ENCODE measurements at regions of chr1 and their contacts with region 1.

Region 1: GRCh38 chr1:112298558-112298957 is 97.5 kb upstream of the CTTNBP2NL start:
- DNase-seq: peak; percentile 72
- H3K4me3 ChIP-seq: no peak overlapping the region
- H3K27ac ChIP-seq: no peak overlapping the region
- H3K4me1 ChIP-seq: no peaks in the 10 kb centered on the region
- H3K27me3 ChIP-seq: peaks cover 6% of the 10 kb centered on the region in 2 experiments
- CTCF ChIP-seq: peak; percentile 76 to 83
- POLR2A ChIP-seq: no peak

Region 2: GRCh38 chr1:112317140-112317539 is 18.6 kb after region 1 on chr1:
- CTCF ChIA-PET with region 1: interaction called, 43 read pairs
- POLR2A ChIA-PET with region 1: no interaction called
- dilution Hi-C with region 1: no loop called
- intact Hi-C with region 1: no loop called
- DNase-seq: no peak
- H3K4me3 ChIP-seq: no peak overlapping the region
- H3K27ac ChIP-seq: no peak overlapping the region
- H3K4me1 ChIP-seq: peaks cover 4% of the 10 kb centered on the region
- H3K27me3 ChIP-seq: peaks cover 2 to 4% of the 10 kb centered on the region in 2 experiments
- CTCF ChIP-seq: no peak
- POLR2A ChIP-seq: no peak

Region 3: DNA sequence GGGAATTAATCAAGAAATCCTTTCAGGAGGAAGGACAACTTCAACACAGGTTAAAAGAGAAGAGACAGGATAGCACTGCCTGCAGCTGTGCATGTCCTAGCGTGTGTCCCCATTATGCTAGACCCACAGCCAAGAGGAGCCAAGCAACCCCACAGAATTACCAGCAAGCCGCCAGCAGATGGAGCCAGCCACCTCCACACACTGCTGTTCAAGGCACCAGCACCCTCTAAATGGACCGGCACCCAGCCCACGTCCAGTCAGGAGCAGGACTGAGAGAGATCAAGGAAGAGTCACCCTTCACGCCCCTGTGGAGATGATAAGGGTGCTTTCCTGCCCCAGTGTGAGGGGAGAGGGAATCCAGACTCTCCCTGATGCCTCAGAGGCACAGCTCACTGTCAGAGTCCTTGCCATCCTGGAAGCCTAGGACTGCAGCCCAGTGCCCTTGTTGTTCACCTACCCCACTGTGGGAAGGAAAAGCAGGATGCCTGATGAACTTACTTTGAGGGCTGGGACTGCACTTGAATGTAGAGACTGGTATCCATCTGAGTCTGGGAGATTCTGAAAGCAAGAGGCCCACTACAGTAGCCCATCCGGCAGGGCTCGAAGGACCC is 60.3 kb after region 1 on chr1:
- CTCF ChIA-PET with region 1: interaction called, 20 read pairs
- POLR2A ChIA-PET with region 1: no interaction called
- dilution Hi-C with region 1: no loop called
- intact Hi-C with region 1: no loop called
- DNase-seq: peak; percentile 65
- H3K4me3 ChIP-seq: no peak overlapping the region
- H3K27ac ChIP-seq: no peak overlapping the region
- H3K4me1 ChIP-seq: no peaks in the 10 kb centered on the region
- H3K27me3 ChIP-seq: peaks cover 14 to 30% of the 10 kb centered on the region in 2 experiments
- CTCF ChIP-seq: peak; percentile 79 to 88
- POLR2A ChIP-seq: no peak

Region 4: GRCh38 chr1:112614460-112615065 is 316.0 kb after region 1 on chr1:
- CTCF ChIA-PET with region 1: interaction called, 10 read pairs
- POLR2A ChIA-PET with region 1: no interaction called
- dilution Hi-C with region 1: no loop called
- intact Hi-C with region 1: loop called (anchors 2 kb)
- DNase-seq: peak; percentile 64
- H3K4me3 ChIP-seq: no peak overlapping the region
- H3K27ac ChIP-seq: no peak overlapping the region
- H3K4me1 ChIP-seq: peaks cover 14% of the 10 kb centered on the region
- H3K27me3 ChIP-seq: no peaks in the 10 kb centered on the region
- CTCF ChIP-seq: peak; percentile 40 to 49
- POLR2A ChIP-seq: no peak